ENCODE measurements at regions of chr11 and their contacts with region 1.

Region 1: GRCh38 chr11:125329786-125330185 is 165.2 kb downstream of the PKNOX2 start:
- DNase-seq: no peak
- H3K4me3 ChIP-seq: no peak overlapping the region
- H3K27ac ChIP-seq: no peak overlapping the region
- H3K4me1 ChIP-seq: no peaks in the 10 kb centered on the region
- H3K27me3 ChIP-seq: peaks cover 3% of the 10 kb centered on the region
- CTCF ChIP-seq: no peak

Region 2: GRCh38 chr11:125281831-125282595 is 47.8 kb before region 1 on chr11:
- CTCF ChIA-PET with region 1: no interaction called
- dilution Hi-C with region 1: loop called (anchors 5 kb)
- in situ Hi-C with region 1: no loop called
- intact Hi-C with region 1: no loop called
- DNase-seq: peak; percentile 57
- H3K4me3 ChIP-seq: no peak overlapping the region
- H3K27ac ChIP-seq: no peak overlapping the region
- H3K4me1 ChIP-seq: no peaks in the 10 kb centered on the region
- H3K27me3 ChIP-seq: no peaks in the 10 kb centered on the region
- CTCF ChIP-seq: no peak

Region 3: DNA sequence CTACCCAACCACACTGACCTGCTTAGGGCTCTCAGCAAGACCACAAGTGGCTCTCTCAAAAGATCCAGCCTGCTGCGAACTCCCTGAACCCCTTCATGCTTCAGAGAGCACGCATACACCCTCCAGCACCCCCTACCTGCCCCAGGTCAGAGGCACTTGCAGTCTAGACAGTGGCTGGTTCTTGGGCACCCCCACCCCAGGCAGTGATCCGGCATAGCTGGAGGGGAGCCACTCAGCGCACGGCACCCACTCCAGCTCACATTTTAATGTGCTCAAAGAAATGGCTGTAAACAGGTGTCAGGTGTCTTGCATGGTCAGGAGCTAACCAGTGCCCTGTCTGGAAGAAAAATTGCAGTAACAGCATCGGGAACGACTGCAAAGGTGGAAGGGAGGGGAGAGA is 24.4 kb before region 1 on chr11:
- CTCF ChIA-PET with region 1: no interaction called
- dilution Hi-C with region 1: no loop called
- in situ Hi-C with region 1: no loop called
- intact Hi-C with region 1: no loop called
- DNase-seq: no peak
- H3K4me3 ChIP-seq: no peak overlapping the region
- H3K27ac ChIP-seq: no peak overlapping the region
- H3K4me1 ChIP-seq: peaks cover 10% of the 10 kb centered on the region
- H3K27me3 ChIP-seq: no peaks in the 10 kb centered on the region
- CTCF ChIP-seq: no peak

Region 4: DNA sequence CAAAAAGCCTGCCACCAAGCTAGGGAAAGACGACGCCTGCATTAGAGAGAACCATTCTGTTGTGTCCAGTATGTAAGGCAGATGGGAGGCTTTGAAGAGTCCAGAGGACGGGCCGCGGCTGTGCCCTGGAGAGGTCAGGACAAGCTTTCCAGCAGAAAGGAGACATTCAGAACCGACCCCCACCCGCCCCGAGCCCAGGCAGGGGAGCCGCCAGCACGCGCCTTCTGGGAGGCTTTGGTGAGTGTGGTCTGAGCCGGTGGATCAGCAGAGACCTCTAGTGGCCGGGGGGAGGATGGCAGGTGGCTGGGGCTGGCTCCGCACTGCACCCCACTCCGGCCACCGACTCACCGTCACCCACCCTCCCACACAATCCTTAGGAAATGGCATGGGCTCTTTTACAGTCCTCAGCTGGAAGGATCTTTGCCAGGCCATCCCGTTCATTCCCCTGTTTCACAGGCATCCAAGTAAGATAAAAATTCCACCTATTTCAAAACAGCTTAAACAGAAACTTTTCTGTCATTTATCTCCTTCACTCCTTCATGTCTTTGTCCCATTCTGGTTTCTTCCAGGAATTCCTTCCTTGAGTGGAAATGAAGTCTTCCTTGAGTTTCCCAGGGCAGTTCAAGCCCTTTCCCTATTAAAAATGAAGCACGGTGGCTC is 75.1 kb after region 1 on chr11:
- CTCF ChIA-PET with region 1: no interaction called
- dilution Hi-C with region 1: no loop called
- in situ Hi-C with region 1: no loop called
- intact Hi-C with region 1: no loop called
- DNase-seq: peak; percentile 27
- H3K4me3 ChIP-seq: no peak overlapping the region
- H3K27ac ChIP-seq: no peak overlapping the region
- H3K4me1 ChIP-seq: peaks cover 11% of the 10 kb centered on the region
- H3K27me3 ChIP-seq: no peaks in the 10 kb centered on the region
- CTCF ChIP-seq: peak; percentile 81 to 96

Region 5: DNA sequence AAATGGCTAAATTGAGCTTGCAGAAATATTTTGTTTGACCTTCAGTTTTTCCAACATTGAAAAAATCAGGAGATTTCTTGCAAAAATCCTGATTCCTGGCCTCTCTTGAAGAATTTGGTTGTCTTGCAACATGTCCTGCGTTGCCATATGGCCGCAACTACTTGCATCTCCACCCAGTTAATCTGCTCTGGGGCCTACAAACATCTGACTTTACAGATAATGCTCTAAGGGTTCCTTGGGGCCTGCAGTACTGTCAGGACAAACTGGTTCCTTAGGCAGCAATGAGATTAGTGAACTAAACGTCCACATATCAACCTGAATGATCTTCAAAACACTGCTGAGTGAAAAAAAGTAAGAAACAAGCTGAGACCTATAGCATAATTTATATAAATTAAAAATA is 202.9 kb after region 1 on chr11:
- CTCF ChIA-PET with region 1: no interaction called
- dilution Hi-C with region 1: no loop called
- in situ Hi-C with region 1: no loop called
- intact Hi-C with region 1: no loop called
- DNase-seq: no peak
- H3K4me3 ChIP-seq: no peak overlapping the region
- H3K27ac ChIP-seq: no peak overlapping the region
- H3K4me1 ChIP-seq: no peaks in the 10 kb centered on the region
- H3K27me3 ChIP-seq: no peaks in the 10 kb centered on the region
- CTCF ChIP-seq: no peak